ENCODE measurements at regions of chr6 and their contacts with region 1.

Region 1: GRCh38 chr6:112043032-112044007 is 10.6 kb upstream of the CCN6 start:
- DNase-seq: peak; percentile 95
- H3K4me3 ChIP-seq: peak overlapping the region; percentile 33 to 95 (median 89)
- H3K27ac ChIP-seq: peak overlapping the region; percentile 92
- H3K4me1 ChIP-seq: peaks cover 38% of the 10 kb centered on the region
- H3K27me3 ChIP-seq: no peaks in the 10 kb centered on the region
- CTCF ChIP-seq: peak; percentile 96 to 98
- POLR2A ChIP-seq: peak; percentile 54

Region 2: DNA sequence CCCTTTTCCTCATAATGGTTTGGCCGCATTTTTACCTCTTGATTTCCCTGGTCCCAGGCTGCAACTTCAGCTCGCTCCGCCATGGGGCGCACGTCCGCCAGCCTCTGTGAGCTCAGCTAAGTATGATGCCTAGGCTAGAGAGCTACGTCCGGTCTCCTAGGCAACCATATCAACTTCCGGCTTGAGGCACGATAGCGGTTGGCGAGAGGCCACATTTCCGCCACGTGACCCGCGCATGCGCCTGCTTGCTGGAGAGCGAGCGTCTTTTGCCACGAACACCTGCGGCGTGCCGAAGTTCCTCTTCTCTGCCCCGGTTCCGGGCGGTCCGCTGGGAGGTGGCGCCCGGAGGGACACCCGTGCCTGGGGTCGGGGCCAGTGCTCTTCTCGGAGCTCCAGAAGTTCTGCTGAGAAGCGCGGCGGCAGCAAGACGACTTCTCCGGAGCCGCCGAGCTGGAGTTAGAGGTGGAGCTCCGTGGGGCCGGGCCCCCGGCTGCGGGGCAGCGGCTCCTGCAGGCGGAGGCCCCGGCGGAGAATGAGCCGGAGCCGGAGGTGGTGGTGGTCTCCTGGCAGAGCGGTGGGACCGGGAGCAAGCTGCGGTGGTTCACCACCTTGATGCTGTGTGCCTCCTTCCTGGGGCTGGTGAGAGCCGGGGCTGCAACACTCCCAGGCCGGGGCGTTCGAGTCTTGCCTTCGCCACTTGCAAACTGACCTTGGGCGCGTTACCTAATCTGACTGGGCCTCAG is 784.1 kb before region 1 on chr6:
- CTCF ChIA-PET with region 1: interaction called, 21 read pairs
- POLR2A ChIA-PET with region 1: no interaction called
- dilution Hi-C with region 1: no loop called
- intact Hi-C with region 1: loop called (anchors 1 kb)
- DNase-seq: peak; percentile 99
- H3K4me3 ChIP-seq: peak overlapping the region; percentile 41 to 68 (median 47)
- H3K27ac ChIP-seq: peak overlapping the region; percentile 55
- H3K4me1 ChIP-seq: peaks cover 11% of the 10 kb centered on the region
- H3K27me3 ChIP-seq: peaks cover 11 to 25% of the 10 kb centered on the region in 2 experiments
- CTCF ChIP-seq: peak; percentile 89 to 98
- POLR2A ChIP-seq: peak; percentile 81

Region 3: DNA sequence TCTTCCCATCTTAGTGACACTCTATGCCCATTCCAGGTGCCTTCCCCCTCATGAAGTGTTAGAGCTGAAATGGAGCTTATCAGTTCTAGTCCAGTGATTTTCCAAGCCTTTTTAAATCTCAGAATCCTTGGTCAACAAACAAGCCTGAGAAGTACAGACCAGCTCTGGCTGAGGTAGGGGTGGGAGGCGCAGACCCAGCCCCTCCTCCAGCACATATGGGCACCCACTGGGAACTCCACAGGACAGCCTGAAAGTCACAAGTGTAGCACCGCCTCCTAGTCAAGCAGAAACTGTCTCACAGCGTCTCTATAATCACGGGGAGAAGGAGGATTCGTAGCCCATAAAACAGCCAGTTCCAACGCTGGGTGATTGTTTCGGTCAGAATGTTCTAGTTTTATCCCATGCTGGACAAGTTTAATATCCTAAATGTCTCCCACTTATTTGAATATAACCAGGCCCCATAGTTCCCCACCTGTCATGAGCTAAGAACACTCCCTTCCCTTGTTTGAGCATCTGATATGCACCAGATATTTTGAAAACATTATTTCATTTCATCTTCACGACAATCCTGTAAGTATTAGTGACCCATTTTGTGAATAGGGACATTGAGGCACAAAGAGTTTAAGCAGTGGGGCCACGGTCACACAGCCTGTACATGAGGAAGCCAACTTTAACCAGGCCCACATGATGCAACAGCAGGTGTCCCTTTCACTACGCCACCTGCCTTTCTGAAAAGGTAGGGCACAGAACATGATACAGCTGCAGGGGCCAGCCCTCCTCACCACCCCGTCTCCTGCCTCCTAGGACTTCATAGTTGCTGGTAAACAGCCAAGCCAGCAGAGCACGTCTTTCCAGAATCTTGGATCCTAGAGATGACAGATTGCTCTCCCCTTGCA is 477.7 kb before region 1 on chr6:
- CTCF ChIA-PET with region 1: no interaction called
- POLR2A ChIA-PET with region 1: no interaction called
- dilution Hi-C with region 1: no loop called
- intact Hi-C with region 1: loop called (anchors 1 kb)
- DNase-seq: no peak
- H3K4me3 ChIP-seq: no peak overlapping the region
- H3K27ac ChIP-seq: peak overlapping the region; percentile 94
- H3K4me1 ChIP-seq: peaks cover 52% of the 10 kb centered on the region
- H3K27me3 ChIP-seq: no peaks in the 10 kb centered on the region
- CTCF ChIP-seq: no peak
- POLR2A ChIP-seq: no peak

Region 4: GRCh38 chr6:111709615-111710398 is 333.5 kb before region 1 on chr6:
- CTCF ChIA-PET with region 1: interaction called, 56 read pairs
- POLR2A ChIA-PET with region 1: interaction called, 6 read pairs
- dilution Hi-C with region 1: no loop called
- intact Hi-C with region 1: loop called (anchors 1 kb)
- DNase-seq: peak; percentile 84
- H3K4me3 ChIP-seq: no peak overlapping the region
- H3K27ac ChIP-seq: peak overlapping the region; percentile 26
- H3K4me1 ChIP-seq: peaks cover 4% of the 10 kb centered on the region
- H3K27me3 ChIP-seq: no peaks in the 10 kb centered on the region
- CTCF ChIP-seq: peak; percentile 36 to 57
- POLR2A ChIP-seq: no peak

Region 5: DNA sequence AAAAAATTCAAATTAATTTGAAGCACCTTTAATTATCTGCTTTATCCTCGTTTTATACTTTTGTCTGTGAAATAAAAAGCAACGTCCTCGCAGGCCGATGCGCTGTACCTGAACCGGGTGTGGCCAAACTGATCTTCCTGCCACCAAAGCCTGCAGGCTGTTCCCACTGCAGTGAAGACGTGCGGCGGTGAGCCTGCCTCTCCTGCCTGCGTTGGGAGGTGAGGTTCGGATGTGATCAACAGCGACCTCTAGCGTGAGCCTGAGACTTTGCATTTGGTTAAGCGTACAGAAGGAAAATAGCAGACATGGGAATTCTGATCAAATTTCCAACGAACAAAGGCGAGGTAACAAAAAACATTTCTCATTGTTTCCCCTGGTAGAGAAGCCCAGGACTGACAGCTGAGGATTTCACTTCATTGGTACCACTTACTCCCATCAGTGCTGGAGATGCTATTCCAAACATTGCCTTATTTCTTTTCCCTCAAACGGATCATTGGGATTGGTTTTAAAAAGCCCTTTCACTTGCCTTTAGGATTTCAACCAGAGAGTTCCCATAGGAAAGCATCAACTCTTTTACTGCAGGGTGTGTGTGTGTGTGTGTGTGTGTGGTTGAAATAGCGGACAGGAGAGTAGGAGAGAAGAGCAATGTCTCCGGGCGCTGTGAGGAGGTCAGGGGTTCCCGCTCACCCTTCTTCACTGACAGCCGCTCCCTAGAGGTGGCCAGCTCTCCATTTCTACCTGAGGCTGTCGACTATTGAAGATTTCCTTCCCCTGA is 46.1 kb before region 1 on chr6:
- CTCF ChIA-PET with region 1: interaction called, 5 read pairs
- POLR2A ChIA-PET with region 1: no interaction called
- dilution Hi-C with region 1: no loop called
- intact Hi-C with region 1: loop called (anchors 1 kb)
- DNase-seq: peak; percentile 74
- H3K4me3 ChIP-seq: no peak overlapping the region
- H3K27ac ChIP-seq: no peak overlapping the region
- H3K4me1 ChIP-seq: peaks cover 14% of the 10 kb centered on the region
- H3K27me3 ChIP-seq: no peaks in the 10 kb centered on the region
- CTCF ChIP-seq: peak; percentile 88
- POLR2A ChIP-seq: no peak

Measured in endothelial cell of umbilical vein (primary cell).